K562 (cell line): ENCODE measurements at regions of chr1 and their contacts with region 1.

Region 1: GRCh38 chr1:14039582-14040430 is 339.8 kb downstream of the PRDM2 start:
- DNase-seq: no peak
- ATAC-seq: no peak
- H3K4me3 ChIP-seq: no peak overlapping the region
- H3K27ac ChIP-seq: no peak overlapping the region
- H3K4me1 ChIP-seq: no peaks in the 10 kb centered on the region
- H3K27me3 ChIP-seq: no peaks in the 10 kb centered on the region; a peak in 1 of 5 replicates
- CTCF ChIP-seq: no peak
- EP300 ChIP-seq: no peak
- POLR2A ChIP-seq: no peak
- RAD21 ChIP-seq: no peak

Region 2: DNA sequence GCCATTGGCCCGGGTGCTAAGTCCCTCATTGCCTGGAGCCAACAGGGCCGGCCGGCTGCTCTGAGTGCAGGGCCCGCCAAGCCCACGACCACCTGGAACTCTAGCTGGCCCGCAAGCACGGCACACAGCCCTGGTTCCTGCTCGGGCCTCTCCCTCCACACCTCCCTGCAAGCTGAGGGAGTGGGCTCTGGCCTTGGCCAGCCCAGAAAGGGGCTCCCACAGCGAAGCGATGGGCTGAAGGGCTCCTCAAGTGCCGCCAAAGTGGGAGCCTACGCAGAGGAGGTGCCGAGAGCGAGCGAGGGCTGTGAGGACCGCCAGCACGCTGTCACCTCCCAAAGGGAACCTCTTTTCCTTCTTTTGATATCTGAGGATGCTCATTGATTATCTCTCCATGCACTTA is 56.4 kb before region 1 on chr1:
- CTCF ChIA-PET with region 1: no interaction called
- POLR2A ChIA-PET with region 1: no interaction called
- in situ Hi-C with region 1: no loop called
- intact Hi-C with region 1: no loop called
- DNase-seq: no peak
- ATAC-seq: no peak
- H3K4me3 ChIP-seq: no peak overlapping the region
- H3K27ac ChIP-seq: no peak overlapping the region
- H3K4me1 ChIP-seq: peaks cover 0 to 6% of the 10 kb centered on the region in 2 experiments; a peak in 1 of 5 replicates
- H3K27me3 ChIP-seq: no peaks in the 10 kb centered on the region
- CTCF ChIP-seq: no peak
- EP300 ChIP-seq: no peak
- POLR2A ChIP-seq: no peak
- RAD21 ChIP-seq: no peak

Region 3: GRCh38 chr1:14055442-14056223 is 15.8 kb after region 1 on chr1:
- CTCF ChIA-PET with region 1: no interaction called
- POLR2A ChIA-PET with region 1: no interaction called
- in situ Hi-C with region 1: no loop called
- intact Hi-C with region 1: loop called (anchors 2 kb)
- DNase-seq: no peak
- ATAC-seq: no peak
- H3K4me3 ChIP-seq: no peak overlapping the region
- H3K27ac ChIP-seq: no peak overlapping the region
- H3K4me1 ChIP-seq: no peaks in the 10 kb centered on the region
- H3K27me3 ChIP-seq: peaks cover 0 to 7% of the 10 kb centered on the region in 2 experiments; a peak in 1 of 5 replicates
- CTCF ChIP-seq: no peak
- EP300 ChIP-seq: no peak
- POLR2A ChIP-seq: no peak
- RAD21 ChIP-seq: no peak

Region 4: DNA sequence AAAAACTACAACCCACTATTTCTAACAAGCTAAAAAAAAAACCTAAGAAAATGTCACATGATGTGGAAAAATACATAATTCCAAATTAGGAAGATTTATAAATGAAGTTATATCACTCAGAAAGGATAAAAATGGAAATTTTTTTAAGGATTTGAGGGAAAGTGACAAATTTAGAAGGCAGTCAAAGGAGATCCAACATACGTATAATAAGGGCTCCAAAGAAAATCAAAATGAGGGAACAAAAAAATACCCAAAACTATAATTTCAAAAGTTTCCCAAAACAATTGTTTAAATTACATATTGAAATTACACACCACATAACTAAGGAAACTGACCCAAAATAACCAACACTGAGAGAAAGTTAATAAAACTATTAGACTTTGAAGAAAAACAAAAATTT is 177.6 kb after region 1 on chr1:
- CTCF ChIA-PET with region 1: no interaction called
- POLR2A ChIA-PET with region 1: no interaction called
- in situ Hi-C with region 1: no loop called
- intact Hi-C with region 1: no loop called
- DNase-seq: no peak
- ATAC-seq: no peak
- H3K4me3 ChIP-seq: no peak overlapping the region
- H3K27ac ChIP-seq: no peak overlapping the region
- H3K4me1 ChIP-seq: no peaks in the 10 kb centered on the region
- H3K27me3 ChIP-seq: no peaks in the 10 kb centered on the region
- CTCF ChIP-seq: no peak
- EP300 ChIP-seq: no peak
- POLR2A ChIP-seq: no peak
- RAD21 ChIP-seq: no peak